ENCODE measurements at regions of chr9 and their contacts with region 1.

Region 1: DNA sequence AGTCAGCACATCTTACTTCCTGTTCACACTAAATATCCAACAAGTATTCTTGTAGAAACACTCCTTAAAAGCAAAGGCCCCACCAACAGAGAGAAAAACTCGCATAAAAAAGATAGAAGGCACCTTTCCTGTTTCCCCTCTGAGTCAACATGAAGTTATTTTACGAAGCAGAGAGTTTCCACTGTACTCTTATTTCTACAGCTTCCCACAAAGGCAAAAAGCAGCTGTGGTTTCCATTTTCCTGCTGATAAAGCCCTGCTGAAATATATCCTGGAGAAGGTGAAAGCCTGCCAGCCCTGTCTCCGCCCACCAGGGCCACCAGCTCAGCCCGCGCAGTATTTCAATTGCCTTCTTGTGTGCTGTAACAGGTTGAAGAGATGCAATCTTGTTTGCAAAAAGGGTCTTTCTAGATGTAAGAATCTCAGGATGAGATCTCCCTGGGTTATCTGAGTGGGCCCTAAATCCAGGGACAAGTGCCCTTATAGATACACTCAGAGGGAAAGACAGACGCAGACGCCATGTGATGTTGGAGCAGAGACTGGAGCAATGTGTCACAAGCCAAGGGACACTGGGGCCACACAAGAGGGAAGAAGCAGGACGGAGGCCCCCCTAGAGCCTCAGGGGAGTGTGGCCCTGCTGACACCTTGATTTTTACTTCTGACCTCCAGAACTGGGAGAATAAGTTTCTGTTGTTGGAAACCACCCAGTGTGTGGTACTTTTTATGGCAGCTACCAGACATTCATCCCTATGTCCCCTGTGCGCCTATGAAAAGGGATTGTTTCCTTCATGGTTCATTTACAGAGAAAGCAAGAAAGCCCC is 19.9 kb downstream of the SEMA4D start:
- DNase-seq: peak; percentile 79
- ATAC-seq: peak; percentile 43
- H3K4me3 Mint-ChIP-seq: peak overlapping the region; percentile 92
- H3K27ac Mint-ChIP-seq: peak overlapping the region; percentile 99
- H3K4me1 Mint-ChIP-seq: peaks cover 94% of the 10 kb centered on the region
- H3K27me3 Mint-ChIP-seq: no peaks in the 10 kb centered on the region

Region 2: DNA sequence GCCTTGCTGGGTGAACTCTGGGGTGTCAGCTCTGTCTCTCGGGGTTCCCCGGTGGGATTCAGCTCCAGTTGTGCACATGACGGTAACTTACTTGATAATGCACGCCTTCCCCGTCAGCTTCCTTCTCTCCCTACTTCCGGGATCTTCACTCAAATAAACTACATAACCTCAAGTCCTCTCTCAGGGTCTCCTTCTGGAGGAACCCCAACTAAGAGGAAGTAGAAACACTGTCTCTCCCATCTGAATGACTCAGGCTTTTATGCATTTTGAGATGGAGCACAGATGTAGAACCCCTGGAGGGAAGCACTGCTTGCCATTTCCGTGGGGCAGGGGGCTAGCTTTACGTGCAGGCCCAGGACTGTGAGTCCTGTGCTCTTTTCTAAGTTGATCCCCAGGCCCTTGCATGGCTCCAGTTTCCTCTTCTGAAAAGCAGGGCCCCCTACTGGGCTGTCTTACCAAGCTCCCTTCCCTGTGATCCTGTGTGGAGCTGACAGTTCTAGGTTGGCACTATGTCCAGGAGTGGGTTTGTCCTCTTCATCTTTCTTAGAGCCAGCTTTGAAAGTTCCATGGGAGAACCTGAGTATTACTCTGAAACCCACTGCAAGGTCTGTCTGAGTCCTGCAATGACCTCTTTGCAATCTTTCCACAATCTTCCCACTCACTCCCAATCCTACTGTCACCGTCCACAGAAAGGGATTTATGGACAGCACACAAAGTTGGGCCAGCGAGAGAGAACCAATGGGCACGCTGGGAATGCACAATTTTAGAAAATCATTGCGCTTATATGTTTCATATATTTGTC is 469.1 kb before region 1 on chr9:
- CTCF ChIA-PET with region 1: no interaction called
- POLR2A ChIA-PET with region 1: no interaction called
- intact Hi-C with region 1: no loop called
- DNase-seq: no peak
- ATAC-seq: no peak
- H3K4me3 Mint-ChIP-seq: no peak overlapping the region
- H3K27ac Mint-ChIP-seq: no peak overlapping the region
- H3K4me1 Mint-ChIP-seq: no peaks in the 10 kb centered on the region
- H3K27me3 Mint-ChIP-seq: peaks cover 7% of the 10 kb centered on the region

Region 3: DNA sequence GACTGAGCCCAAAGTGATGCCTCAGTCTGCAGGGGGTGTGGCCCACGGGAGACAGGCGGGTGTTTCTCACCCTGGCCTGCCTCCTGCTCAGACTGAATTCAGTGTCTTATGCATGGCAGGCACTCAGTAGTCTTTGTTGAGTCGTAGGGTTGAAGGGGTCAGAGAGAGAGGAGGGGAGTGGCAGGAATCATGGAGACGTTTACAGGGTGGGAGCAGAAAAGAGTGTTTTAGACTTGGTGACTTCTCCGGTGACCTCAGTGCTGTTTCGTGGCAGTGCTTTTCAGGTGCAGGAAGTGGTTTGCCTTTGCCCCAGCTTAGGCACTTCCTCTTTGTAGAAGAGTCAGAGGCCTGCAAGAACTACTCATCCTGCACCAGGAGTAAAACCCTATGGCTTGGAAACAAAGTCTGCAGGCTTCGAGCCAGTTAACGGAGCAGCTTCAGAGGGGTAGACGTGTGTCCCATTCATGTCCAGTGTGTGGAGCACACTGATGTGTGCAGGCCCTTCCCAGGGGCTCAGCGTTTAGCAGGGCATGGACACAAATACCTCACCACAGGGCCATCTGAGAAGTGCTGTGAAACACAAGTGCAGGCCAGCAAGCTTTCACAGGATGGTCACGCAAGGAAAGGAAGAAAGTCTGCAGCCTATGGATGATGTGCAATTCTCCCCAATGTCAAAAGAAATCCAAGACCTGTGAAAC is 44.4 kb after region 1 on chr9:
- CTCF ChIA-PET with region 1: no interaction called
- POLR2A ChIA-PET with region 1: interaction called, 4 read pairs
- intact Hi-C with region 1: loop called in 1 of 2 experiments (anchors 5 kb)
- DNase-seq: peak; percentile 86
- ATAC-seq: peak; percentile 90
- H3K4me3 Mint-ChIP-seq: peak overlapping the region; percentile 62
- H3K27ac Mint-ChIP-seq: peak overlapping the region; percentile 97
- H3K4me1 Mint-ChIP-seq: peaks cover 94% of the 10 kb centered on the region
- H3K27me3 Mint-ChIP-seq: no peaks in the 10 kb centered on the region

Measured in activated CD4-positive, alpha-beta T cell treated with anti-CD3 and anti-CD28 coated beads for 36 hours (primary cell).